Left cardiac atrium (tissue), 4 donors: ENCODE measurements at regions of chr13 and their contacts with region 1.

Region 1: DNA sequence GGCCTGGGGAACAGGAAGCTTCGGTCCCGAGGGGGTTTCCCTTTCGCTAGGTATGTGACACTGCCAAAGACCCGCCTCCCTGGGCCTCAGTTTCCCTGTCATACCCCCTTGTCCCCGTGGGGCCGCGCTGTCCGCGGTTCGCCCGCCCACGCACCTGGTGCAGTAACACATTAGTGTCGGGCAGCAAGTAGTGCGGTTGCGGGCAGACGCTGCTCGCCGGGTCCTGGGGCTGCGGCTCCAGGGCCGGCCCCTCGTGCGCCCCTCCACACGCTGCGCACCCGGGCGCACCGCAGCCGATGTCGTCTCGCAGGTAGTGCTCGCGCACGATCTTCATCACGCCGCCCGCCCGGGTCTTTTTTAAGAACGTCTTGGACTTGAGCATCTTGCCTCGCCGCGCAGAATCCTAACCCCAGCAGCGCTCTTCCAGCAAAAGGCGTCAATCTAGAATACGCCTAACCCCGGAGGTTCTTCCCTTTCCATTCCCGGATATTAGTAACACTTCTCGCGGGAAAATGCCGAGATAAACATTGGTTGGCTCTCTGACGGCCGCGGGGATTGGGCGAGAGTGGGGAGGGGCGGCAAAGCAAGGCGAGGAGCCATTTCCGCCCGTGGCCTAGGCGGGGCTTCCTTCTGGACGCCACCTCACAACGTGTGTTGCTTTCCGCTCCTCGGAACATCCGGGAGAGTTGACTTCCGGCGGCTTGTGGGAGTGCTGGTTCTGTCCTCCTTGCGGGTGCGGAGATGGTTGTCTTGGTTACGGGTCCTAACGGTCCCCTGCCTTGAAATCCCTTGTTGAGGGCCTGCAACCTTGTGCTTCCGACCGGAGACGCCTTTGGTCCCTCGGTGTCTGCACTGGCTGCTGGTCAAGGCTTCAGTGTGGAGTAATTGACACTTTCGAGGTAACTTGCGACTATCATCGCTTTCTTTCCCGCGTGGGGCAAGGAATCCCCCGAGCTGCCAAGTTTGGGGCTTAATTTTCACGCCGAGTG is at the starts of genes DIS3 and PIBF1:
- DNase-seq: peak; percentile 98
- ATAC-seq: peak; percentile 100
- total RNA-seq, gene DIS3: 14.3 to 18.6 TPM
- total RNA-seq, gene PIBF1: 12.2 to 13.5 TPM

Region 2: DNA sequence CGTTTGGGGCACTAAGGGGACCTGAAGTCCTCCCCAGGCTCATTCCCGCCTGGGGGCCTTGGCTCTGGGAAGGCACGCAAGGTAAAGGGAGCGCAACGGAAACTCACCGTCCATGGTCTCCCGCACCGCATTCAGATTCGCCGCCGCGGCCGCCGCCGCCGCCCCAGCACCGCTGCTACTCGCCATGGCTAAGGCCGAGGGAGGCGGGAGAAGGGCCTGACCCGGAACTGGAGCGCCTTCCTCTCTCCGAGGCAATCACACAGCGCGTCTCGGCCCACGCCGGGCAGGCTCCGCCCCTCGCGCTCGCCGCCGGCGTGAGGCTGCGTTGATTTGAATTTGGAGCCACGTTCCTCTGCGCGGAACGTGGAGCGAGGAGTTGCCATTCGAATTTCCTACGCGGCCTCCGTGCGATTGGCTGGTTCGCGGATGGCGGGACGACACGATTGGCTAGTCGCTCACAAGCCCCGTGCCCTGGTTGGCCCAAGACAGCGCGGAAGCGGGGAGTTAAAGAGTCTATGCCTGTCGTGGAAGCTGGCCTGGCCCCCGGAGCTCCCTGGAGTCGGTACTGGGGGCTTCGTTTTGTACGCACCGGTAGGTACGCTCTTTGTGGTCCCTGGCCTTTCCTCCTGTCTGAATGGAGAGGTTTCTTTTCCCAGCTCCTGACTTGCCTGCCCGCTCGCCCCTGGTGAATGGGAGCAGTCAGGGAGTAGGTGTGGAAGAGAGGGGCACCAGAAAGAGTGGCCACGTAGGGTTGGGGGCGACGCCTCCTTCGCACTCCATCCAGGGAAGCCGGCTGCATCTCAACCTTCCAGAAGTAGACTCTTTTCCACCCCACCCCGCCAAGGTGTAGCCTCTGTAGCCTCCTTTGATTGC is 54.1 kb before region 1 on chr13 and contains the starts of genes BORA and MZT1:
- intact Hi-C with region 1: loop called in 1 of 2 experiments (anchors 5 kb)
- DNase-seq: peak; percentile 97
- ATAC-seq: peak; percentile 98 to 99
- total RNA-seq, gene BORA: 1.2 to 1.6 TPM
- total RNA-seq, gene MZT1: 6.5 TPM

Region 3: GRCh38 chr13:73035649-73036048 is 253.9 kb after region 1 on chr13:
- intact Hi-C with region 1: no loop called
- DNase-seq: no peak
- ATAC-seq: no peak